IMR-90 (cell line): ENCODE measurements at regions of chr13 and their contacts with region 1.

Region 1: GRCh38 chr13:105940882-105941281 is 594.6 kb downstream of the EFNB2 start:
- DNase-seq: no peak
- ATAC-seq: no peak
- H3K4me3 ChIP-seq: no peak overlapping the region
- H3K27ac ChIP-seq: no peak overlapping the region
- H3K4me1 ChIP-seq: no peaks in the 10 kb centered on the region
- H3K27me3 ChIP-seq: no peaks in the 10 kb centered on the region
- CTCF ChIP-seq: no peak
- POLR2A ChIP-seq: no peak
- RAD21 ChIP-seq: no peak

Region 2: GRCh38 chr13:106078191-106078590 is 137.3 kb after region 1 on chr13:
- CTCF ChIA-PET with region 1: no interaction called
- POLR2A ChIA-PET with region 1: no interaction called
- dilution Hi-C with region 1: no loop called
- in situ Hi-C with region 1: no loop called
- intact Hi-C with region 1: loop called (anchors 1 kb)
- DNase-seq: peak; percentile 49
- ATAC-seq: peak; percentile 68
- H3K4me3 ChIP-seq: no peak overlapping the region
- H3K27ac ChIP-seq: no peak overlapping the region
- H3K4me1 ChIP-seq: no peaks in the 10 kb centered on the region; the same call in 1 of the 2 replicates
- H3K27me3 ChIP-seq: no peaks in the 10 kb centered on the region
- CTCF ChIP-seq: no peak
- POLR2A ChIP-seq: no peak
- RAD21 ChIP-seq: no peak

Region 3: GRCh38 chr13:106393781-106394180 is 452.9 kb after region 1 on chr13:
- CTCF ChIA-PET with region 1: no interaction called
- POLR2A ChIA-PET with region 1: no interaction called
- dilution Hi-C with region 1: no loop called
- in situ Hi-C with region 1: no loop called
- intact Hi-C with region 1: no loop called
- DNase-seq: peak; percentile 43
- ATAC-seq: peak; percentile 57; the same call in 1 of the 2 replicates
- H3K4me3 ChIP-seq: no peak overlapping the region
- H3K27ac ChIP-seq: no peak overlapping the region
- H3K4me1 ChIP-seq: no peaks in the 10 kb centered on the region
- H3K27me3 ChIP-seq: no peaks in the 10 kb centered on the region
- CTCF ChIP-seq: no peak
- POLR2A ChIP-seq: no peak
- RAD21 ChIP-seq: no peak